Activated CD4-positive, alpha-beta T cell treated with anti-CD3 and anti-CD28 coated beads, Interleukin-2, amount 10 ng/mL, durations not matched to agents 24 days and 14 days (primary cell): ENCODE measurements at regions of chr12 and their contacts with region 1.

Region 1: DNA sequence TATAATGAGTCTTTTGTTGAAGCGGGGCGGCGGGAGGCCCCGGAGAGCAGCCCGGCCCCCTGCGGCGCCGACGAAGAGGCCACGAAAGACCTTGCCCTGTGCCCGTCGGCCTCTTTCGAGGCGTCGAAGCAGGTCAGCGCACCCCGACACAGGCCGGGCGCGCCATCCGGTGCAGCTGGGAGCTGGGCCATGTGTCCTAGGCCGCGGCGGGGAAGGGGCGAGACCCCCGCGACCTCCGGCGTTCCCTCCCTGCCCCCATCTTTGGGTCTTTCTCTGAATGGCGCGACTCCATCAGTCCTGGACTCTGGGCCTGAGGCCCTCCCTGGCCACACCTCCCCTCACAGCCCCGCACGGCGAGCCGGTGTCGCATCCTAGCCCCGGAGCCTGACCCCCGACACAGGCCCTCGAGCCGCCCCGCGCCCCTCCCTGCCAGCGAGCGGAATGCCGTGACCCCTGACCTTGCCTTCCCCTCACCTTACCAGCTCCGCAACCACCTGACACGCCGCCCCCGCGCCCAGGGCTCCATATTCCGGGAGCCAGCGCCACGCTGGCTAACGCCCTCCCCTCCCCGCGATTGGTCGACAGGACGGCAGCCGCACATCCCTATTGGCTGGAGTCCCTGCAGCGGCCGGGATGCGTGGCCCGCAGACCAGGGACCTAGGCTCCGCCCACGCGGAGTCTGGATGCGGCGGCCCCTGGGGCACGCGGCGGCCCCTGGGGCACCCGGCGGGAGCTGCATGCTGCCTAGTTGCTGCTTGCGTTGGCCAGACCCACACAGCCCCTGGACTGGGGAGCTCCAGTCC is at the start of gene SLC11A2:
- DNase-seq: peak; percentile 98
- H3K4me3 Mint-ChIP-seq: peak within 1 kb of the TSS; percentile 99
- H3K27ac Mint-ChIP-seq: peak within 1 kb of the TSS; percentile 100
- H3K4me1 Mint-ChIP-seq: peaks cover 45% of the 10 kb centered on the region
- H3K27me3 Mint-ChIP-seq: peaks cover 9% of the 10 kb centered on the region
- total RNA-seq, gene SLC11A2: 54.2 and 56.2 TPM in 2 replicates

Region 2: GRCh38 chr12:50763639-50764285 is 262.3 kb before region 1 on chr12 and contains the start of gene ATF1:
- intact Hi-C with region 1: loop called (anchors 1 kb)
- DNase-seq: peak; percentile 98
- H3K4me3 Mint-ChIP-seq: peak within 1 kb of the TSS; percentile 94
- H3K27ac Mint-ChIP-seq: peak within 1 kb of the TSS; percentile 99
- H3K4me1 Mint-ChIP-seq: peaks cover 31% of the 10 kb centered on the region
- H3K27me3 Mint-ChIP-seq: no peaks in the 10 kb centered on the region
- total RNA-seq, gene ATF1: 66.0 and 67.6 TPM in 2 replicates

Region 3: DNA sequence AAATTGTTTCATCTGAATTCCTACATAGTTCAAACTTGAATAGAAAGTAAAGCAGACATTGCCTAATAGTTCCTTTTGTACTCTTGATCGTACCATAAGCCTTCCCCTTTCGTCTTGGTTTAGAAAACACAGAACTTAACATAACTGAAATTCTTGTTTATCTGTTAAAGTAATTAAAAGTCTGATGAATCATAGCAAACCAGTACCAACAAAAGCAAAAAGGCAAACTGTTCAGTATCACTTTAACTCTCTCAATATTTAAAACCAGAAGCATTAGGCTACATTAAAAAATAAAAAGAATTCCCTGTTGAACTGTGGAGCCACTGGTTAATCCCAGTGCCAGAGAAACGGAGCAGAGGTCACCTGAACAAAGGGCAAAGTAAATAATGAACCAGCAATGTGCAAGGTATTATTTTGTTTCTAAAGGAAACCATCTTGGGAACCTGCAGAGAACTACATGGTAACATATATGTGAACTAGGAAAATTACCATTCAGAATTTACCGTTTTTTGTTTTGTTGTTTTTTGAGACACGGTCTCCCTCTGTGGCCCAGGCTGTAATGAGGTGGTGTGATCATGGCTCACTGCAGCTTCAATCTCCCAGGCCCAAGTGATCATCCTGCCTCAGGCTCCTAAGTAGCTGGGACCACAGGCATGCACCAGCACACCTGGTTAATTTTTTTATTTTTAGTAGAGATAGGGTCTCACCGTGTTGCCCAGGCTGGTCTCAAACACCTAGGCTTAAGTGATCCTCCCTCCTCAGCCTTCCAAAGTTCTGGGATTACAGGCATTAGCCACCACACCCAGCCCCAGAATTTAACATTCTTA is 90.8 kb before region 1 on chr12:
- intact Hi-C with region 1: no loop called
- DNase-seq: no peak
- H3K4me3 Mint-ChIP-seq: no peak overlapping the region
- H3K27ac Mint-ChIP-seq: no peak overlapping the region
- H3K4me1 Mint-ChIP-seq: peaks cover 6% of the 10 kb centered on the region
- H3K27me3 Mint-ChIP-seq: no peaks in the 10 kb centered on the region

Region 4: DNA sequence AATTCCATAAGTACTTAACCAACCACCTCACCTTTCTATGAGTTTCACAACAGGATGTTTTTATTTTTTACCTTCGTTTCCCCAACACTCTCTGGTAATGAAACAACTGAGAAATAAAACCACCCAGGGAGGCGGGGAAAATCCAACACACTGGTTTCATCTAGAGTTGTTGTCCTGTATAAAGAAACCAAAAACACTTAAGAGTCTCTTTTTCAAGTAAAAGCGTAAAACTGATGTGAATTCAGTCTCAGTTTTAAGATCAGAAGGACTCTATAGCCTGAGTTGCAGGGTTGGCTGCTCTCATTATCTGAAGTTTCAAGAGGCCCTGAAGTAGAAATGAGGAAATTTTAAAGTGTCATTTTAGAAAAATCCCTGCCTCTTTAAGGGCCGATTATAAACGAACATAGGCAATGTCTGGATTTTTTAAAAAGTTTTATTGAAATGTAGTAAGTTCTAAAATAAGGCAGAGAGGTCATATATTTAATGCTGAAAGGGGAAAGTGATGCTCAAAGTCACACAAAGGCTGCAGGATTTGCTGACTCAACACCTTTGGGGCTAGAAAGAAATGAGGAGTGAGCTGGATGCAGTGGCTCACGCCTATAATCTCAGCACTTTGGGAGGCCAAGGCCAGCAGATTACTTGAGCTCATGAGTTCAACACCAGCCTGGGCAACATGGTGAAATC is 46.5 kb before region 1 on chr12:
- intact Hi-C with region 1: loop called (anchors 1 kb)
- DNase-seq: peak; percentile 87
- H3K4me3 Mint-ChIP-seq: peak overlapping the region; percentile 64
- H3K27ac Mint-ChIP-seq: peak overlapping the region; percentile 95
- H3K4me1 Mint-ChIP-seq: peaks cover 23% of the 10 kb centered on the region
- H3K27me3 Mint-ChIP-seq: no peaks in the 10 kb centered on the region

Region 5: GRCh38 chr12:51011955-51012354 is 14.1 kb before region 1 on chr12:
- intact Hi-C with region 1: loop called (anchors 2 kb)
- DNase-seq: no peak
- H3K4me3 Mint-ChIP-seq: no peak overlapping the region
- H3K27ac Mint-ChIP-seq: no peak overlapping the region
- H3K4me1 Mint-ChIP-seq: peaks cover 22% of the 10 kb centered on the region
- H3K27me3 Mint-ChIP-seq: no peaks in the 10 kb centered on the region

Region 6: GRCh38 chr12:51083126-51083833 is 57.2 kb after region 1 on chr12 and contains the start of gene CSRNP2:
- intact Hi-C with region 1: loop called (anchors 2 kb)
- DNase-seq: peak; percentile 98
- H3K4me3 Mint-ChIP-seq: peak within 1 kb of the TSS; percentile 95
- H3K27ac Mint-ChIP-seq: peak within 1 kb of the TSS; percentile 91
- H3K4me1 Mint-ChIP-seq: peaks cover 29% of the 10 kb centered on the region
- H3K27me3 Mint-ChIP-seq: no peaks in the 10 kb centered on the region
- total RNA-seq, gene CSRNP2: 22.7 and 22.9 TPM in 2 replicates

Region 7: GRCh38 chr12:51160814-51161459 is 134.9 kb after region 1 on chr12:
- intact Hi-C with region 1: no loop called
- DNase-seq: no peak
- H3K4me3 Mint-ChIP-seq: no peak overlapping the region
- H3K27ac Mint-ChIP-seq: no peak overlapping the region
- H3K4me1 Mint-ChIP-seq: peaks cover 29% of the 10 kb centered on the region
- H3K27me3 Mint-ChIP-seq: no peaks in the 10 kb centered on the region

Region 8: DNA sequence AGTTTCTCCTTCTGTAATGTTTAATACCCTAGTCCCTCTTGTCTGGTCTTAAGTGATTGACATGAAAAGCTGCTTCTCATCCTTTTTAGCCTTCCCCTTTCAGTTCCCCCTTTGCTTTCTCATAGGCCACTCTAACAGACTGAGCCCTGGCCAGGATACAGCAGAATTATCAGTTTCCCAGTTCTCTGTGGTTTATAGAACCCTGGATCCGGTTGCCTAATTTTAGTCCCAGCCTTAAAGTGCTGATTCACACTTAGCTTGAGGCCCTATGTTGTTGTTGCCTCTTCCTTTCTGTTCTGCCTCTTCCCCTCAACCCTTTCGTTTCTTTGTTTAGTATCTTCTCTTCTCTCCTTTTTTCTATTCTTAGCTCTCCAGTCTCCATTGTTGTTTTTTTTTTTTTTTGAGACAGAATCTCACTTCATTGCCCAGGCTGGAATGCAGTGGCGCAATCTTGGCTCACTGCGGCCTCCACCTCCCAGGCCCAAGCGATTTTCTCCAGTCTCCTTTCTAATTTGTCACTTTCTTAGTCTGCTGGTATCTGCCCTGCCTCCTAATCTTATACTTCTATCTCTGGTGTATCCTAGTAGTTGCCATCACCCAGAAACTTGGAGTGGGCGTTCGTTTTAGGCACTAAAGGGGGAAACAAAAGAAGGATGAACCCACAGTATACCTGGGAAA is 300.9 kb after region 1 on chr12:
- intact Hi-C with region 1: loop called (anchors 5 kb)
- DNase-seq: peak; percentile 74
- H3K4me3 Mint-ChIP-seq: peak overlapping the region; percentile 74
- H3K27ac Mint-ChIP-seq: peak overlapping the region; percentile 89
- H3K4me1 Mint-ChIP-seq: peaks cover 62% of the 10 kb centered on the region
- H3K27me3 Mint-ChIP-seq: no peaks in the 10 kb centered on the region

Region 9: GRCh38 chr12:51672334-51672733 is 646.3 kb after region 1 on chr12:
- intact Hi-C with region 1: no loop called
- DNase-seq: no peak
- H3K4me3 Mint-ChIP-seq: no peak overlapping the region
- H3K27ac Mint-ChIP-seq: no peak overlapping the region
- H3K4me1 Mint-ChIP-seq: peaks cover 3% of the 10 kb centered on the region
- H3K27me3 Mint-ChIP-seq: peaks cover 25% of the 10 kb centered on the region